ENCODE measurements at regions of chr14 and their contacts with region 1.

Region 1: DNA sequence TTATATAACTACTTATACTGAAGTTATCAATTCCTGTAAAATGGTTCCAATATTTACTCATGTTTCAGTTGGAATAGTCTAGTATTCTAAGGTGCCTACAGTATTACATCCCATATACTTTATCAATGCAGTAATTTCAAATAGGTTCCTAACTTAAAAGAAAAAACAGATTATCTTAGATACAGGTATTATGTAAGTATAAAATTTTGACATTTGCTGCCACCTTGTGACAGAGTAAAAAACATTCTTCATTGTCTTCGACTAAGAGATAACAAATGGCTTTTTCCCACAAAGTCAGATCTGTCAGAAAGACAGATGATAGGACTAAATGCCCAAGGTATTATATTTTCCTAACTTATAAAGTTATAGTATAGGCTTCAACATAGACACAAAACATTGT is 78.7 kb downstream of the TXNDC16 start:
- DNase-seq: peak in 2 of 5 donors; percentile 37 to 41
- H3K4me3 ChIP-seq: no peak overlapping the region
- H3K4me3 Mint-ChIP-seq: no peak overlapping the region
- H3K27ac ChIP-seq: no peak overlapping the region
- H3K27ac Mint-ChIP-seq: no peak overlapping the region
- H3K4me1 ChIP-seq: peaks cover 12% of the 10 kb centered on the region
- H3K4me1 Mint-ChIP-seq: peaks cover 6 to 30% (median 19%) of the 10 kb centered on the region in 3 donors
- H3K27me3 ChIP-seq: no peaks in the 10 kb centered on the region
- H3K27me3 Mint-ChIP-seq: no peaks in the 10 kb centered on the region

Region 2: GRCh38 chr14:52299692-52300278 is 173.8 kb before region 1 on chr14:
- CTCF ChIA-PET with region 1: interaction called, 10 read pairs
- POLR2A ChIA-PET with region 1: no interaction called
- DNase-seq: peak in 2 of 5 donors; percentile 48 to 50
- H3K4me3 ChIP-seq: no peak overlapping the region
- H3K4me3 Mint-ChIP-seq: no peak overlapping the region
- H3K27ac ChIP-seq: no peak overlapping the region
- H3K27ac Mint-ChIP-seq: peak overlapping the region in 3 of 8 donors; percentile 14 to 88 (median 82)
- H3K4me1 ChIP-seq: peaks cover 15% of the 10 kb centered on the region
- H3K4me1 Mint-ChIP-seq: peaks cover 51 to 82% (median 62%) of the 10 kb centered on the region in 3 donors
- H3K27me3 ChIP-seq: no peaks in the 10 kb centered on the region
- H3K27me3 Mint-ChIP-seq: peaks cover 0 to 3% of the 10 kb centered on the region in 2 donors

Measured in CD8-positive, alpha-beta memory T cell (primary cell).